ENCODE measurements at regions of chr20 and their contacts with region 1.

Region 1: GRCh38 chr20:354298-355064 is 7.6 kb downstream of the NRSN2 start:
- DNase-seq: peak; percentile 86
- H3K4me3 ChIP-seq: no peak overlapping the region
- H3K27ac ChIP-seq: no peak overlapping the region
- H3K4me1 ChIP-seq: peaks cover 4% of the 10 kb centered on the region
- H3K27me3 ChIP-seq: no peaks in the 10 kb centered on the region
- CTCF ChIP-seq: peak; percentile 95

Region 2: DNA sequence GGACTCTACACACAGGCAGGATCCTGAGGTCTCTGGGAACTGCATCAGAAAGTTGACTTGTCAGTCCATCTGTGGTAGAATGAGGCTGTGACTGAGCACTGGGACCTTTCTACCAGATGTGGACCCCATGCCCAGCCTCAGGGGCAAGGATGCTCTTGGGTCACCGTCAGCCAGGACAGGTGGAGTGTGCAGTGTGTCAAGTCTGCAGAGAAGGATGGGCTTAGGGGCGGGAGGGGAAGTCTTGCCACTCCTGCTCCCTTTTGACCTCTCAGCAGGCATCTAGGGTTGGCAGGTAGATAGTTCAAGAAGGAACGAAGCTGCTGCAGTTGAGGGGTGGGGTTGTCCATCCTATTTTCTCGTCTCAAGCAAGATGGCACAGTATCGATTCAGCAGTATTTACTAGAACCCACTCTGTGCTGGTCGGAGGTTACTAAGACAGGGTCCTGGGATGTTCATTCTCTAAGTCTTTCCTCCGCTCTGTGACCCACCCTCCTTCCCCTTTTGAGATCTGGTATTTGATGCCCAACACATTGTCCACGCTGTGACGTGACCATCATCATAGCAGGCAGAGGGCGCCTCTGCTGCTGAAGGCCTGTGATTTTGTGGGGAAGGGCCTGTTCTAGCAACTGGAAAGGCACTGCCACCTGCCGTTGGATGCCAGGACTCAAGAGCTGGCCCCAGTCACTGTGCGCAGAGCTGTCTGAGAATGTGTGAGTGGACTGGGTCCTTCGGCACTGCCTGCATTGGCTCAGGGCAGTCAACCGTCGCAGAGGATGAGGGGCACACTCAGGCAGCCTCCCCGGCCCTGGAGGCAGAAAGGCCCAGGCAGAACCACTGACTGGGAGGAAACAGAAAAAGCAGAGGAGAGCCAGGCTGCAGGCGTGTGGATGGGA is 76.8 kb after region 1 on chr20:
- CTCF ChIA-PET with region 1: interaction called, 13 read pairs
- POLR2A ChIA-PET with region 1: interaction called, 7 read pairs
- intact Hi-C with region 1: loop called (anchors 1 kb)
- DNase-seq: peak; percentile 71
- H3K4me3 ChIP-seq: no peak overlapping the region
- H3K27ac ChIP-seq: no peak overlapping the region
- H3K4me1 ChIP-seq: no peaks in the 10 kb centered on the region
- H3K27me3 ChIP-seq: no peaks in the 10 kb centered on the region
- CTCF ChIP-seq: peak; percentile 76

Region 3: DNA sequence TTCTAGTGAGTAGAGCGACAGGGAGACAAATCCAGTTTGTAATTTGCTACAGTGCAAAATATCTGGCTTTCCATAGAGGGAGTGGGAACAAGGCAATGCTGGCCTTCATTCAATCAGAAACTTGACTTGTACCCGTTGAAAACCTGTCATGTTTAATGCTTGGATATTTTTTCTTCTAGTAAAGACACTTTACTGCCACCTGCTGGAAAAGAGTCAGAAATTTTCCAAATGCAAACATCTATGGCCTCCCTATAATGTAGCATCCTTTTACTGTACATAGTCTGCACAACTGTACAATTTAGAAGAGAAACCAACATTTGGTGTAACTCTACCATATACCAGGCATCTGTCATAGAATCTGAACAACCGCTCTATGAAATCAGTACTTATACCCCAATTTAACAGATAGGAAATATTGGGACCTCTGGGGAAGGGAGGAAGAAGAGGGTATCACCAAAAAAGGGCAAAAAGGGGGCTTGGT is 124.5 kb after region 1 on chr20:
- CTCF ChIA-PET with region 1: interaction called, 7 read pairs
- POLR2A ChIA-PET with region 1: no interaction called
- intact Hi-C with region 1: loop called (anchors 1 kb)
- DNase-seq: peak; percentile 79
- H3K4me3 ChIP-seq: no peak overlapping the region
- H3K27ac ChIP-seq: peak overlapping the region; percentile 61
- H3K4me1 ChIP-seq: peaks cover 3% of the 10 kb centered on the region
- H3K27me3 ChIP-seq: no peaks in the 10 kb centered on the region
- CTCF ChIP-seq: peak; percentile 70

Region 4: GRCh38 chr20:645318-646106 is 291.0 kb after region 1 on chr20:
- CTCF ChIA-PET with region 1: no interaction called
- POLR2A ChIA-PET with region 1: no interaction called
- intact Hi-C with region 1: loop called (anchors 2 kb)
- DNase-seq: peak; percentile 79
- H3K4me3 ChIP-seq: no peak overlapping the region
- H3K27ac ChIP-seq: no peak overlapping the region
- H3K4me1 ChIP-seq: no peaks in the 10 kb centered on the region
- H3K27me3 ChIP-seq: no peaks in the 10 kb centered on the region
- CTCF ChIP-seq: peak; percentile 97

Region 5: DNA sequence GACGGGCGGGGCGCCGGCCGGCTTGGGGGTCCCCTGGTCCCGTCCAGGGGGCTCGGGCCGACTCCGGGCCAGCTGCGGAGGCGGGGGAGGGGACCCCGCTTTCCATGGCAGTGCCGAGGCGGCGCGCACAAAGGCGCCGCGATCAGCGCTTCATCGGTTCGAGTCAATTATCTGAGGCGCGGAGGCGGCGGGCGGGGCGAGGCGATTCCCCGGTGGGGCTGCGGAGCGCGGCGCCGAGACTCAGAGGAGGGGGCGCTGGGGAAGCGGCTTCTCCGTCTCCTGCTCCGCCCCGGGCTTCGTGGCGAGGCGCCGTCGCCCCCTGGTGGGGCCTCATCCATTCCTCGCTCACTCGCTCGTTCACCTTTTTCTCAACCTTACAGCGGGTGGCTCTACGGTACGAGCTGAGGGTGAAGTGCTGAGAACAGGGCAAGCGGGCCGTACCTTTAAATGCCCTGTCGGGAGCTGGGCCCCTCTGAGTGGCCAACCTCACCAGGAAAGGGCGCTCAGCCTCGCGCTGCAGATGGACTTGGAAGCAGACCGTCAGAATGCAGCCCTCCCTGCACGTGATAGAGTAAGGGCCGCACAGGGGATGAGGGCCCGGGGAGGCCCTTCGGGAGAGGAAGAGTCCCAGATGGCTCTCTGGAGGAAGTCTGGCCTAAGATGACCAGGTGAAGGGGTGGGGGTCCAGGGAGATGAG is 373.9 kb after region 1 on chr20:
- CTCF ChIA-PET with region 1: interaction called, 3 read pairs
- POLR2A ChIA-PET with region 1: no interaction called
- intact Hi-C with region 1: loop called (anchors 5 kb)
- DNase-seq: peak; percentile 69
- H3K4me3 ChIP-seq: peak overlapping the region; percentile 58
- H3K27ac ChIP-seq: no peak overlapping the region
- H3K4me1 ChIP-seq: no peaks in the 10 kb centered on the region
- H3K27me3 ChIP-seq: peaks cover 18% of the 10 kb centered on the region
- CTCF ChIP-seq: peak; percentile 77

Measured in A673 (cell line).